ENCODE measurements at regions of chr9 and their contacts with region 1.

Region 1: GRCh38 chr9:101119206-101119819 is 90.8 kb downstream of the PLPPR1 start:
- DNase-seq: peak; percentile 71 to 79
- H3K4me3 ChIP-seq: no peak overlapping the region
- H3K4me3 Mint-ChIP-seq: no peak overlapping the region
- H3K27ac Mint-ChIP-seq: no peak overlapping the region
- H3K4me1 ChIP-seq: no peaks in the 10 kb centered on the region
- H3K4me1 Mint-ChIP-seq: no peaks in the 10 kb centered on the region
- H3K27me3 ChIP-seq: no peaks in the 10 kb centered on the region
- H3K27me3 Mint-ChIP-seq: no peaks in the 10 kb centered on the region
- CTCF ChIP-seq: peak; percentile 81 to 92

Region 2: DNA sequence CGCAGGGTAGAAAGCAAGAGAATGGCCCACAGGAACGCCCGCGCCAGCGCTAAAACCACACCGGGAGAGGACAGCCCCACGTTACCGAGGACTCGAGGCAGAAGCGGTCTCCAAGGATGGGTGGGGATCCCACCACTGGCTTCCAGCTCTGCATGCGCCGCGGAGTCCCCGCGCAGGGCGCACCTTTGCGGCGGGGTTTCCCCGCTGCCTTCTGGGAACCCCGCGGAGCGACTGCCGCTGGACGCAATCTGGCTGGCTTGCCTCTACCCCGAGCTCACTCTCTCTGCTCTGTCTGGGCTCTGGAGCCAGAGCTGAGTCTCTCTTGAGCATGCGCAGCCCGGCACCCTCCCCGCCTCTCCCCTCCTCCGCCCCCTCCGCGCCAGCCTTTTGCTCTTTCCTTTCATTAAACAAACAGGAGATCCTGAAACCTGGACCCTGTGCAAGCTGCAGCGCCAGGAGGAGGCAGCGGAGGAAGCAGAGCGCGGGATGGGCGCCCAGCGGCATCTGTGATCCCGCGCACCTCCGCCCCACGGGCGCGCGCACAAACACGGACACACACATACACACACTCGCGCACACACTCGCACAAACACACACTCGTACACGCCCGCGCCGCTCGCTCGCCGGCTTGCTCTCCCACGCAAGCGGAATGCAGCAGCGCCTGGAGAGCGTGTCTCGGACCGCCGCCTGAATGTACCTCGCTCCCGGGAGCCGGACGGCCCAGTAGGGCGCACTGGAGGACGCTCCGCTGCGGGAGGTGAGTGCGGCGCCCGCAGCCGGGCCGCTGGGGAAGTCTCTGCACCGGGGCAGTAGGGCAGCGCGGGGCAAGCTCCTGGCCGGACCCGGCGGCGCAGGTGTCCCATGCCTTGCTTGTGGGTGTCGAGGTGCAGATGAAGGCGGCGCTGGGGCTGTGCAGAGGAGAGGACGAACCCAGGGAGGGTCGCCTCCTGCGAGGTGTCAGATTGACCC is 90.7 kb before region 1 on chr9 and contains the start of gene PLPPR1:
- CTCF ChIA-PET with region 1: no interaction called
- POLR2A ChIA-PET with region 1: no interaction called
- intact Hi-C with region 1: loop called (anchors 5 kb)
- DNase-seq: peak; percentile 59 to 81
- H3K4me3 ChIP-seq: peak within 1 kb of the TSS; percentile 41
- H3K4me3 Mint-ChIP-seq: peak within 1 kb of the TSS; percentile 84
- H3K27ac Mint-ChIP-seq: no peak within 1 kb of the TSS
- H3K4me1 ChIP-seq: 0 out of 2 replicates have a peak, but pooled peaks cover 3% of the 10 kb centered on the region
- H3K4me1 Mint-ChIP-seq: peaks cover 6% of the 10 kb centered on the region
- H3K27me3 ChIP-seq: peaks cover 3% of the 10 kb centered on the region
- H3K27me3 Mint-ChIP-seq: peaks cover 36% of the 10 kb centered on the region
- CTCF ChIP-seq: no peak
- total RNA-seq, gene PLPPR1: not detected in 2 replicates

Region 3: GRCh38 chr9:101176384-101176783 is 57.1 kb after region 1 on chr9:
- CTCF ChIA-PET with region 1: no interaction called
- POLR2A ChIA-PET with region 1: no interaction called
- intact Hi-C with region 1: no loop called
- DNase-seq: no peak
- H3K4me3 ChIP-seq: no peak overlapping the region
- H3K4me3 Mint-ChIP-seq: no peak overlapping the region
- H3K27ac Mint-ChIP-seq: no peak overlapping the region
- H3K4me1 ChIP-seq: no peaks in the 10 kb centered on the region
- H3K4me1 Mint-ChIP-seq: no peaks in the 10 kb centered on the region
- H3K27me3 ChIP-seq: no peaks in the 10 kb centered on the region
- H3K27me3 Mint-ChIP-seq: no peaks in the 10 kb centered on the region
- CTCF ChIP-seq: peak in 1 of 2 experiments; percentile 23

Region 4: DNA sequence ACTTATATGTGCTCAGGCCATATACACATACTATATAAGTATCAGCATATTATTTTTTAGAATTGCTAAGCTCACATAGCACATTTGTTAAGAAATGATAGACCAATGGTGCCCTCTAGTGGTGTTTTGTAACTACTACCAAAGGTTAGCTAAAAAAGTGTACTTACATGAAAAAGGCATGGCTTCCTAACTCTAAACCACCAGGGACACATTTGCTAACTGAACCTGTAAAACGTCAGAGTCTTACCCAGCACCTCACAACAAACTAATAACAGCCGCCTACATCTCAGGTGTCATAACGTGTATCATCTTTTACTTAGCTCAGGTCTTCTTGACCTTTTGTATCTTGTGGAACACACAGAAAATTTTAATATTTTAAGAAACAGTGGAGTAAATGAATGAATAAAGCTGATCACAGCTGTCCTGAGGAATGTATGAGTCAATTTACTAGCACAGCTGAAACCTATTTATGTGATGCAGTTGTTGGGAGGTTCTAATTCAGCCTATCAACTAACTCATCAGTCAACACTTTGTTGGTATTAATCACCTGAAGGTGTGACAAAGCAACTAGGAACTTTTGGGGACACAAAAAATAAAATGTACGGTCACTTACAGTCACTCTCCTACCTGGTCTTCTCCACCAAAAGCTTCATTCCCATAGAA is 192.6 kb after region 1 on chr9:
- CTCF ChIA-PET with region 1: interaction called, 40 read pairs
- POLR2A ChIA-PET with region 1: no interaction called
- intact Hi-C with region 1: loop called (anchors 1 kb)
- DNase-seq: peak in 1 of 2 experiments; percentile 72
- H3K4me3 ChIP-seq: no peak overlapping the region
- H3K4me3 Mint-ChIP-seq: no peak overlapping the region
- H3K27ac Mint-ChIP-seq: no peak overlapping the region
- H3K4me1 ChIP-seq: peaks cover 11% of the 10 kb centered on the region
- H3K4me1 Mint-ChIP-seq: peaks cover 6% of the 10 kb centered on the region
- H3K27me3 ChIP-seq: no peaks in the 10 kb centered on the region
- H3K27me3 Mint-ChIP-seq: no peaks in the 10 kb centered on the region
- CTCF ChIP-seq: peak; percentile 48 to 66

Region 5: DNA sequence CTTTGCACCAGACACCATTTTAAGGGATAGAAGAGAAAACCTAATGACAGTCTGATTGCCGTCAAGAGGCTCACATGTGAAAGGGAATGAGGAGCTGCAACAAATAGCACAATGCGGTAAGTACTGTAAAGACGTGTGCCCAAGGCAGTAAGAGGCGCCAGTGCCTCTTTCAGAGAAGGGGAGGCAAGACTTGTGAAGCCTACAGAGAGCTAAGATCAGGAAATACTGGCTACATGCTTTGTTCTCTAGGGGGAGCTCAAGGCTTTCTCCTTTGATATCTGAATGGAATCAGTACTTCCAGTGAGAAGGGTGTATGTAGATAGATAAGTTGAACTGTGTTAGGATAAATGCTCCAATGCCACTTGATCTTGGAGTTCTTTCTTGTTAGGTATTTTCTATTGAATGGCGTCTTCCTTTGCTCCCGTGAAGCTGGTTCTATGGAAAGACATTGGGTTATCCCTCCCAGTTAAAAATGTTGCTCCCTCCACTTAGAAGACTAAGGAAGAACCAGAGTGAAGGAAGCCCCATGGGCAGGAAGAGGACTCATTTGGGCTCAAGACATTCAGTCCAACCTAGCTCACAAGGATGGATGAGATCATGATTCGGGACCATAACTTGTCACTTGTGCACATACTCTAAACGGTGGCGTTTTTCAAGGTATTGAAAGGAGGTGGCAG is 339.8 kb after region 1 on chr9:
- CTCF ChIA-PET with region 1: interaction called, 4 read pairs
- POLR2A ChIA-PET with region 1: no interaction called
- intact Hi-C with region 1: loop called (anchors 1 kb)
- DNase-seq: peak; percentile 37 to 56
- H3K4me3 ChIP-seq: no peak overlapping the region
- H3K4me3 Mint-ChIP-seq: no peak overlapping the region
- H3K27ac Mint-ChIP-seq: no peak overlapping the region
- H3K4me1 ChIP-seq: peaks cover 2% of the 10 kb centered on the region; the same call in 1 of the 2 replicates
- H3K4me1 Mint-ChIP-seq: peaks cover 6% of the 10 kb centered on the region
- H3K27me3 ChIP-seq: no peaks in the 10 kb centered on the region
- H3K27me3 Mint-ChIP-seq: no peaks in the 10 kb centered on the region
- CTCF ChIP-seq: peak; percentile 52 to 69

Measured in Caco-2 (cell line).